ENCODE measurements at regions of chr1 and their contacts with region 1.

Region 1: DNA sequence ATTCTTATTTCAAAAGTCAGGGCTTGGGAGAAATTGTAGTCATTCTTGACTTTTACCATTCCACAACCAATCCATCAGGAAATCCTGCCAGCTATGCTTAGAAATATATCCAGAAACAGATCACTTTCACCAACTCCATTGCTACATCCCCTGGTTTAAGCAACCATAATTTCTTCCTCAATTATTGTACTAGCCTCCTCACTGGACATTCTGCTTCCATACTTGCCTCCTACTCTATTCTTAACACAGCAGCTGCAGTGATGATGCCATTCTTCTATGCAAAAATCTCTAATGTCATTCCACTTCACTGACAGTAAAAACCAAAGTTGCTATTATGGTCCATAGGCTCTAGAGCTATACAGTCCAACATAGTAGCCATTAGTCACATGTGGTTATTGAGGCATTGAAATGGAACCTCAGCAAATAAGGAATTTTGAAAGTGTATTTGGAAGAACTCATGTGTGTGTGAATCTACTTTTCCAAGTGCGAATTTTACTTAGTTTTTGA is 110.7 kb upstream of the KIAA0040 start:
- H3K4me3 ChIP-seq: no peak overlapping the region
- H3K27ac ChIP-seq: no peak overlapping the region
- H3K4me1 ChIP-seq: no peaks in the 10 kb centered on the region
- CTCF ChIP-seq: no peak

Region 2: GRCh38 chr1:175319418-175320230 is 16.4 kb after region 1 on chr1:
- CTCF ChIA-PET with region 1: interaction called, 13 read pairs
- POLR2A ChIA-PET with region 1: no interaction called
- H3K4me3 ChIP-seq: no peak overlapping the region
- H3K27ac ChIP-seq: no peak overlapping the region
- H3K4me1 ChIP-seq: no peaks in the 10 kb centered on the region
- CTCF ChIP-seq: peak; percentile 55; the same call in 1 of the 2 replicates